ENCODE measurements at regions of chr18 and their contacts with region 1.

Region 1: DNA sequence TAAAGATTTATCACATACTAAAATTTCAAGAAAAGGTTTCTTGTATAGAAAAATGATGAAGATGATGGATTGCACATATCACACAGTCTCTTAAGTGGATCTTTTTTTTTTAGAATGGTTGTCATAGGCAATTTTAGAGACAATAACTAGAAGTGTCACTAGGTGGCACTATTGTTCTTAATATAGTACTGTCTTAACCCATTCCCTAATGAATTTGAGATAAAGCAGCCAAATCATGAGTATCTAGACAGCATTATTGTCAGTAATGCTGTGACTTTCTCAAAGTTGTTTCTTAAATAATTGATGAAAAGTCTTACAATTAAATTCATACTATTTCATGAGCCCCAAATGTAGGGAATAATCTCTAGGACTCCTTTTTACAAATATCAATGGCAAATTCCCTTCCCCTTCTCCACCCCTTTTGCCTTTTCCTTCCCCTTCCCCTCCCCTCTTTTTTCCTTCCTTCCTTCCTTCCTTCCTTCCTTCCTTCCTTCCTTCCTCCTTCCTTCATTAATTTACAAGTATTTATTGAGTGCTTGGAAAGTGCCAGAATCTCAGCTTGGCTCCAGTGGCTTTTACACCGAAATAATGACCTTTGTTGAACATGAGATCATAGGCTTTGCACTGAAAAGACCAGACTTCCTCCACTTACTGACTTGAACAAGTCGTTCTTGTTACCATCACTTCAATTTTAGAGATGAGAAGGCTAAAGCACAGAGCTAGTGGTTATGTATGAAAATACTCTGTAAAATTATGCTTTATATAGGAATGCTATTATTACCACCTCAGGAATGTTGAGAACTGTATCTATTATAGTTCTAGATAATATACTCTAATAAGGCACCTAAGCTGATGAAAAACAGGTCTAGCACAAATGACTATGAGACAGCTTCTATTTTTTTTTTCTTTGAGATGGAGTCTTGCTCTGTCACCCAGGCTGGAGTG is 19.8 kb downstream of the MYL12B start:
- DNase-seq: no peak
- ATAC-seq: peak; percentile 90
- H3K4me3 ChIP-seq: no peak overlapping the region
- H3K27ac ChIP-seq: no peak overlapping the region
- H3K4me1 ChIP-seq: no peaks in the 10 kb centered on the region
- H3K27me3 ChIP-seq: no peaks in the 10 kb centered on the region

Region 2: GRCh38 chr18:3037423-3037915 is 244.3 kb before region 1 on chr18:
- intact Hi-C with region 1: no loop called
- DNase-seq: peak in 1 of 2 donors; percentile 57
- ATAC-seq: peak; percentile 60
- H3K4me3 ChIP-seq: no peak overlapping the region
- H3K27ac ChIP-seq: peak overlapping the region in 1 of 2 donors; percentile 33
- H3K4me1 ChIP-seq: no peaks in the 10 kb centered on the region
- H3K27me3 ChIP-seq: no peaks in the 10 kb centered on the region

Region 3: DNA sequence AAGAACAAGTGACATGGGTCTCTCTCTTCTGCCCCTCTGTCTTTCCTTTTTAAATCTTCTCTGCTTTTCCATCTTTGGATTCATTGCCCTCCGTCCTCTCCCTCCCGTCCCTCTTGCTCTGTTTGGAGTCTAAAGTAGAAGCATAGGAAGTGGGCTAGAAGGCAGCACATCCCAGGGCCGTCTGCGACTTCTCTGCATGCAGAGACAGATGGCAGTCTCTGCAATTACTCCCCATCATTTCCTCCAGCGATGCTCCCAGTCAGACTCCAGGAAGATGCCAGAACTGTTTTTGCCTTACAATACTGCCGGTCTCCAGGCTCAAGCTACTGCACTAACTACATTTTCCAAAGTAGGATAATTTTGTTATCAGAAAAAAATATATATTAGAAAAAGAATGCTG is 233.6 kb before region 1 on chr18:
- intact Hi-C with region 1: no loop called
- DNase-seq: no peak
- ATAC-seq: no peak
- H3K4me3 ChIP-seq: no peak overlapping the region
- H3K27ac ChIP-seq: no peak overlapping the region
- H3K4me1 ChIP-seq: no peaks in the 10 kb centered on the region
- H3K27me3 ChIP-seq: no peaks in the 10 kb centered on the region

Region 4: GRCh38 chr18:3447895-3448837 is 166.4 kb after region 1 on chr18:
- intact Hi-C with region 1: loop called in 1 of 2 experiments (anchors 5 kb)
- DNase-seq: peak; percentile 97 to 98
- ATAC-seq: peak; percentile 86
- H3K4me3 ChIP-seq: peak overlapping the region; percentile 67 to 85
- H3K27ac ChIP-seq: peak overlapping the region; percentile 86 to 88
- H3K4me1 ChIP-seq: peaks cover 0 to 1% of the 10 kb centered on the region in 2 donors
- H3K27me3 ChIP-seq: no peaks in the 10 kb centered on the region

Region 5: DNA sequence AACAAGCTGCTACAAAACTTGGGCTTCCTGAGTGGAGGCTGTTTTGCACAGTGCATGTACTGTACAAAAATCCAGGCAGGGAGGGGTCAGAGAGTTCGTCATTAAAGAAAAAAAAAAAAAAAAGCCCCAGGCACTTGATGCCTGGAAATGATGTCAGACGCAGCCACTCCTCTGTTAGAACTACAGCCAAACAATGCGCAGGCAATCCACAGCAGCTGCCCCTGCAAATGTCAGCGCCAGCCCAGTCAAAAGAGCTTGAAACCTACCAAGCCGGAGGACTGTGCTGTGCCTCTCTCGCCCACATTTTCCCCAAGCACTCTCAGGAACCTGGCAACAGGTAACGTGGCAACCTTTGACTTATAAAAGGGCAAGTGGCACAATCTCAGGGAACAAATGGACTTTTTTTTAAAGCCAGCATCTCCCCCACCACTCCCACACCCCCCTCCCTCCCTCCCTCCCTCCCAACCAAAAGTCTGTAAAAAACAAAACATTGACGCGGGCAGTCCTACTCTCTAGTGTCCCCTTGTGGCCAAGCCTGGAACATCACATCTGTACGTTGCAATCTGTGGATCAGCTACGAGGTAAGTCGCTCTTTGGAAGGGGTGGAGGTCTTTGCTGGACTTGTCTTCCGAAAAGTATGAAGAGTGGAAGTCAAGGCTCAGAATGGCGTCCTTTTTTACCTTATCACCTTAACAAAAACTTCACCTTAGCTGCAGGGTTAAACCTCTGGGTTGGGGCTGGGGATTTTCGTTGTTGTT is 312.4 kb after region 1 on chr18:
- intact Hi-C with region 1: loop called in 1 of 2 experiments (anchors 5 kb)
- DNase-seq: peak; percentile 89 to 90
- ATAC-seq: peak; percentile 94
- H3K4me3 ChIP-seq: peak overlapping the region; percentile 59 to 85
- H3K27ac ChIP-seq: peak overlapping the region; percentile 95 to 100
- H3K4me1 ChIP-seq: peaks cover 7 to 13% of the 10 kb centered on the region in 2 donors
- H3K27me3 ChIP-seq: no peaks in the 10 kb centered on the region

Region 6: DNA sequence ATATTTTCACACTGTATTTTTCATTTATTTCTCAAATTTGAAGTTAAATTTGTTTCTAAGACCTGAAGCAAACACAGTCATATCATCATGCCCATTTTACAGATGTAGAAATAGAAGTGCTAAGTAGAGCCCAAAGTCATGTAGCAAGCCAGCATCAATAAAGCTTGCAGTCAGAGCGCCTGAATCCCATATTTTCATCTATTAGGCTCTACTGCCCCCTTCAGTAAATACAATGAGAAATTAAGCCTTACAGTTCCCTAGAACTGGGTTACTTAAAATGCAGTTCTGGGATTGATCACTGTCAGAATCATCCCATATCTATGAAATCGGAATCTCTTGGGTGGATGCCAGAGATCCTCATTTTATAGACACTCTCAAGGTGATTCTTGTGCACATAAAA is 588.1 kb after region 1 on chr18:
- intact Hi-C with region 1: loop called in 1 of 2 experiments (anchors 10 kb)
- DNase-seq: no peak
- ATAC-seq: peak; percentile 61
- H3K4me3 ChIP-seq: no peak overlapping the region
- H3K27ac ChIP-seq: no peak overlapping the region
- H3K4me1 ChIP-seq: no peaks in the 10 kb centered on the region
- H3K27me3 ChIP-seq: no peaks in the 10 kb centered on the region

Region 7: GRCh38 chr18:4004183-4004829 is 722.6 kb after region 1 on chr18:
- intact Hi-C with region 1: loop called (anchors 10 kb)
- DNase-seq: no peak
- ATAC-seq: no peak
- H3K4me3 ChIP-seq: no peak overlapping the region
- H3K27ac ChIP-seq: no peak overlapping the region
- H3K4me1 ChIP-seq: peaks cover 0 to 3% of the 10 kb centered on the region in 2 donors
- H3K27me3 ChIP-seq: no peaks in the 10 kb centered on the region

Measured in aorta (tissue), 5 donors.